Activated B cell treated with CpG ODN at 0.5 μM for 24 hours (primary cell): ENCODE measurements at regions of chr7 and their contacts with region 1.

Region 1: GRCh38 chr7:142508258-142508689 is 241.0 kb upstream of the PRSS1 start:
- DNase-seq: no peak
- ATAC-seq: no peak
- H3K4me3 Mint-ChIP-seq: no peak overlapping the region
- H3K27ac Mint-ChIP-seq: no peak overlapping the region
- H3K4me1 Mint-ChIP-seq: no peaks in the 10 kb centered on the region
- H3K27me3 Mint-ChIP-seq: peaks cover 6% of the 10 kb centered on the region
- CTCF ChIP-seq: no peak

Region 2: DNA sequence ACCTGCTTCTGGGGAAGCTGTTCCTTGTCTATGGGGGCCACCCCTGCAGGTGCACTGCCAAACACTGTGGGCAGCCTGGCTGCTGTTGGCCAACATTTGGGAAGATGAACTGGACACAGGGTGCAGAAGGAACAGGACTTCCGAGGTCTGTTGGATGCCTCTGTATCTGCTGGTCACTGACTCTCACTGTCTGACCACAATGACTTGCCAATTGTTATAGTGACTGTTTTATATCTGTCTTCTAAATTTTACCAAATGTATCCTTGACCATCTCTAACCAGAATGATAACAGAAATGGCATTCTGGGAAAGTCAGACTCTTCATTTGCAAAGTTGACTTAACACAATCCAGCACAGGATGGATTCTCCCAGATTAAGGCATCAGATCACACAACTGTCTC is 36.5 kb before region 1 on chr7:
- CTCF ChIA-PET with region 1: no interaction called
- POLR2A ChIA-PET with region 1: no interaction called
- intact Hi-C with region 1: loop called (anchors 1 kb)
- DNase-seq: no peak
- ATAC-seq: no peak
- H3K4me3 Mint-ChIP-seq: no peak overlapping the region
- H3K27ac Mint-ChIP-seq: no peak overlapping the region
- H3K4me1 Mint-ChIP-seq: peaks cover 5% of the 10 kb centered on the region
- H3K27me3 Mint-ChIP-seq: peaks cover 26% of the 10 kb centered on the region
- CTCF ChIP-seq: no peak

Region 3: GRCh38 chr7:142482891-142483658 is 25.2 kb before region 1 on chr7:
- CTCF ChIA-PET with region 1: interaction called, 4 read pairs
- POLR2A ChIA-PET with region 1: no interaction called
- intact Hi-C with region 1: loop called (anchors 1 kb)
- DNase-seq: no peak
- ATAC-seq: peak; percentile 72
- H3K4me3 Mint-ChIP-seq: no peak overlapping the region
- H3K27ac Mint-ChIP-seq: no peak overlapping the region
- H3K4me1 Mint-ChIP-seq: peaks cover 25% of the 10 kb centered on the region
- H3K27me3 Mint-ChIP-seq: peaks cover 11% of the 10 kb centered on the region
- CTCF ChIP-seq: no peak

Region 4: DNA sequence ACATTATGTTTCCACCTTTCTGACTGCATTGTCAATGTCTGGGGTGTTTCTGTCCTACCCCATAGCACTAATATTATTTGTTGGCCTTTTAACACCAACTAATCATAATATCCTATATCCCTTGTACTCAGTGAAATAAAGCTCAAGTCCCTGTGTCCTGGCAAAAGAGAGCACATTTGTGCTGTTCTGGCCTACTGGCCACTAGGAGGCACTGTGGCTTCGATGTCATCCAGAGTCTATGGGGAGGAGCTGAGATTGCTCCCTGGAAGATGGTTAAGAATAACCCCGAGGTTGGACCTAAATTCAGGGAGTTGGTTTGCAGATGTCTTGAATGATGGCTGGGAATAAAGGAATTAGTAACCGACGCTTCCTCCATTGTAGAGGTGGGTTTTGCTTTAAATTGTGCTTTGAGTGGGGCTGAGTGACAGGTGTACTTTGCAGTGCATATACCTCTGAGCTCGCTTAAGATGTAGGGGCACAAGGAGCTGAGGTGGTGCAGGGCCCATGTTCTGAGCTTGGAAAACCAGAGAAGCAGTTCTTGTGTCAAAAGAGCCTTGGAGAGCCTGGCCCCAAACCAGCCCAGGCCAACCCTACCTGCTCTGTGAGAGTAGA is 49.8 kb after region 1 on chr7:
- CTCF ChIA-PET with region 1: no interaction called
- POLR2A ChIA-PET with region 1: no interaction called
- intact Hi-C with region 1: no loop called
- DNase-seq: no peak
- ATAC-seq: peak; percentile 42
- H3K4me3 Mint-ChIP-seq: no peak overlapping the region
- H3K27ac Mint-ChIP-seq: no peak overlapping the region
- H3K4me1 Mint-ChIP-seq: no peaks in the 10 kb centered on the region
- H3K27me3 Mint-ChIP-seq: peaks cover 58% of the 10 kb centered on the region
- CTCF ChIP-seq: peak; percentile 48